GM10248 (cell line): ENCODE measurements at regions of chr5 and their contacts with region 1.

Region 1: GRCh38 chr5:179801274-179802245 is 5.1 kb downstream of the MGAT4B start:
- DNase-seq: peak; percentile 80
- CTCF ChIP-seq: peak; percentile 73

Region 2: GRCh38 chr5:179550511-179551230 is 250.9 kb before region 1 on chr5 and contains the start of gene RUFY1:
- CTCF ChIA-PET with region 1: no interaction called
- POLR2A ChIA-PET with region 1: no interaction called
- DNase-seq: peak; percentile 84
- CTCF ChIP-seq: no peak

Region 3: GRCh38 chr5:179768326-179769085 is 33.1 kb before region 1 on chr5:
- CTCF ChIA-PET with region 1: interaction called, 33 read pairs
- POLR2A ChIA-PET with region 1: no interaction called
- DNase-seq: no peak
- CTCF ChIP-seq: no peak

Region 4: DNA sequence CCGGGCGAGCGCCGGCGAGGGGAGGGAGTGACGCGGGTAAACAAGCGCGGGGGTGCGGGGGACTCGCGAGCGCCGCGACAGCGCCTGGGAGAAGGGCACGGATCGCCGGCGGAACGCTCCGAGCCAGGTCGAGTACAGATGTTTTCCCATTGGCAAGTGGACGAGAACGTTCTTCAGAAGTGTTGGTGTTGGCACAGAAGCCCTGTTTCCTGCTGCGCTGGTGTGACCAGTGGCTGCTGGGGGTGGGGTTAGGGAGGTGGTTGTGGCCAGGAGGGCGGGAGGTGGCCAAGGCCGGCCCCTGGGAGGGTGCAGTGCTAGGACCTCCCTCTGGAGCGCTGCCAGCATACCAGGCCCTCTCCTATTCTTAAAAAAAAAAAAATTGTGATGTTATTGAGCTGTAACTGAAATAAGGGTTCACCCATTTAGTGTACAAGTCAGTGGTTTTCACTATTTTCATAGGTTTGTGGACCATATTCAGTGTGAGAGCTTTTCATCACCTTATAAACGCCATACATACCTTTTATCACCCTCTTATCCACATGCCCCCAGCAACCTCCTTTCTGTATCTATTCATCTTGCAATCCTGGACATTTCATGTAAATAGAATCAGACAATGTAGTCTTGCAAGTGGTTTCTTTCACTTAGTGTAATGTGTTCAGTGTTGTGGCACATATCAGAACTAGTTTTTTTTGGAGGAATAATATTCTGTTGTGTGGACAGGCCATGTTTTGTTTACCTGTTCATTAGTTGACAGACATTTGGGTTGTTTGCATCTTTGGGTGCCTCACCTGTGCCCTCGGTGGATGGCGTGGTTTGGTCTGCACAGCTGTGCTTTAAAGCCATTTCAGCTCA is 20.2 kb after region 1 on chr5:
- CTCF ChIA-PET with region 1: interaction called, 13 read pairs
- POLR2A ChIA-PET with region 1: interaction called, 8 read pairs
- DNase-seq: peak; percentile 91
- CTCF ChIP-seq: no peak

Region 5: DNA sequence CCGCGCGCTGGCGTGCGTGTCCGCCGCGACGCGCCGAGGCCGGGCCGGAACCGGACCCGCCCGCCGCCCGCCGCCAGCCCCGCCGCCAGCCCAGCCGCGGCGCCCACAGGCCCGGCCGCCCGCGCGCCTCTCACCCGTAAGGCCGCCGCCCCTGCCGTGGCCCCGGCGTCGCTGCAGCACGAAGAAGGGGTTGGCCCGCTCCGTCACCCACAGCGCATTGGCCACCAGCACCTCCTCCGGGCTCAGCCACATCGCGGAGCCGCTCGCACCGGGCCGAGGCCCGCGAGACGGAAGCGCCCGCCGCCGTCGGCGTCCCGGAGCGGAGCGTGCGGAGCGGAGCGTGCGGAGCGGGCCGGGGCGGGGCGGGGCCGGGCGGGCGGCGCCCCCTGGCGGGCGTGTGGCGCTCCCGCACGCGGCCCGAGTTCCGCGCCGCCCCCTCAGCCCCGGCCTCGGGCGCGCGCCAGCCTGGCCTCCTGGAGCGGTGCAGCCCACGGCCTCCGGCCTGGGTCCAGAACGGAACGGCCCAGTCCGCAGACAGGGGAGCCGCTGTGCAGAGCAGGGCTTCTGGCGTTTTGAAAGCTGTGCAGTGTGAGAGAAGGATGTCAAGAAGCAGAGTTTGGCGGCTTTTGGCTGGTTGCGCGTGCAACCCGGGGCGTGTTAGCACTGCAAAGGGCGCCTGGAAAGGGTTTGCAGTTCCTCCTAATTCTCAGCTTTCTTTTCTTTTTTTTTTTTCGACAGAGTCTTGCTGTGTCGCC is 106.2 kb after region 1 on chr5 and contains the start of gene TBC1D9B:
- CTCF ChIA-PET with region 1: interaction called, 20 read pairs
- POLR2A ChIA-PET with region 1: no interaction called
- DNase-seq: peak; percentile 90
- CTCF ChIP-seq: peak; percentile 58